HEK293T (cell line): ENCODE measurements at regions of chr11 and their contacts with region 1.

Region 1: GRCh38 chr11:111926505-111927391 is 8.0 kb downstream of the C11orf52 start:
- DNase-seq: peak; percentile 97

Region 2: GRCh38 chr11:111870886-111871692 is 55.7 kb before region 1 on chr11 and contains the start of gene ALG9:
- CTCF ChIA-PET with region 1: no interaction called
- POLR2A ChIA-PET with region 1: interaction called, 20 read pairs
- DNase-seq: peak; percentile 74

Region 3: DNA sequence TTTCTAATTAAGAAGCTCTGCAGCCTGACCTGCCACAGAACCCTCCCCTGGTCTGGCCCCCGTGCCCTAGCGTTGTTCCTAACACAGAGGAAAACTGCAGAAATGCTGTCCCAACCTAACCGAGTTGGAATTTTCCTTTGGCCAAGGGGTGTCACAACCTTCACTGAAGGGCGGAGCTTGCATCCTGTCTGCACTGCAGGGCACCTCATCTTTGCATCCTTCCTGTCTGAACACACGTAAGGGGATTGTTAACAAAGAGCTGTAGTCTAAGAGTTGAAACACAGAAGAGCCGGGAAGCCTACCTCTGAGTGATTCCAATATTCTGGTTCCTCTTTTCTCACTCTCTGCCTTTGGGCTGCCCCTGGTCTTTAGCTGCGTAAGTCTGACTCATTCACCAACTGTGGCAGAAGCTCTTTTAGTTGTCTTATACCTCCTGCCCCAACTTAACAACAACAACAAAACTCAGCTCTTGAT is 12.0 kb after region 1 on chr11:
- CTCF ChIA-PET with region 1: interaction called, 3 read pairs
- POLR2A ChIA-PET with region 1: interaction called, 14 read pairs
- DNase-seq: no peak

Region 4: GRCh38 chr11:111977146-111978027 is 50.6 kb after region 1 on chr11:
- CTCF ChIA-PET with region 1: interaction called, 7 read pairs
- POLR2A ChIA-PET with region 1: interaction called, 14 read pairs
- DNase-seq: peak; percentile 63

Region 5: GRCh38 chr11:112024773-112025678 is 98.3 kb after region 1 on chr11 and contains the start of gene DLAT:
- CTCF ChIA-PET with region 1: no interaction called
- POLR2A ChIA-PET with region 1: interaction called, 10 read pairs
- DNase-seq: peak; percentile 87